AG04450 (cell line): ENCODE measurements at regions of chr6 and their contacts with region 1.

Region 1: GRCh38 chr6:72580281-72580940 is 41.5 kb upstream of the KCNQ5 start:
- DNase-seq: peak; percentile 49
- H3K4me3 ChIP-seq: no peak overlapping the region
- H3K27ac ChIP-seq: no peak overlapping the region
- H3K27me3 ChIP-seq: no peaks in the 10 kb centered on the region
- CTCF ChIP-seq: peak; percentile 84

Region 2: DNA sequence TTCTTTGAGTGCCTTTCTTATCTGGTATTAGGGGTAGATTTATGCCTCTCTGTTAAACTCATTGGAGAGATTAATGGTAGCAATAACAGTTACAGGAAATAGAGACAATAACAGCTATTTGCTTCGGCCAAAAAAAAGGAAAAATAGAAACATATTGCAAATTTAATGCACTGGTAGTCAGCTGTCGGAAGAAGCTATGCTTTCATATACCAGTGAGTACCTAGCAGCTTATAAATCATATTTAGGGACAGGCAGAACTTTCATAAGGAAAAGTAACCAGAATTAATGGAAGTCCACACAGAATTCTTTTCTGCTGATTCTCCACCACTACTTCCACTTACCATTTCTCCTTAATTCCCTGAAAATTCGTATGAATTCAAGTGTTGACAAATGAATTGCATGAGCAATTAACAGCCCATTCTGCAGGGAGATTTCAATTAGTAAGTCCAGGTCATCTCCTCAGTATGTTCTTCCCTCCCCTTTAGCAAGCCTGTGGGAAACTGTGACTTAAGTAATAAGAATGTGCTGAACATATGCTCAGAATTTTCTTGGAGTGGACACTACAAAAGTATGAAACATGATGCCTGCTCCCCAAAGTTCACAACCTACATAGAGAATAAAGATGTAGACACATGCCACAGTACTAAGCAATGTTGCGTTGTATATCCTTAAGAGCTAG is 155.3 kb before region 1 on chr6:
- CTCF ChIA-PET with region 1: interaction called, 17 read pairs
- POLR2A ChIA-PET with region 1: no interaction called
- DNase-seq: peak; percentile 74
- H3K4me3 ChIP-seq: no peak overlapping the region
- H3K27ac ChIP-seq: no peak overlapping the region
- H3K27me3 ChIP-seq: no peaks in the 10 kb centered on the region
- CTCF ChIP-seq: no peak

Region 3: DNA sequence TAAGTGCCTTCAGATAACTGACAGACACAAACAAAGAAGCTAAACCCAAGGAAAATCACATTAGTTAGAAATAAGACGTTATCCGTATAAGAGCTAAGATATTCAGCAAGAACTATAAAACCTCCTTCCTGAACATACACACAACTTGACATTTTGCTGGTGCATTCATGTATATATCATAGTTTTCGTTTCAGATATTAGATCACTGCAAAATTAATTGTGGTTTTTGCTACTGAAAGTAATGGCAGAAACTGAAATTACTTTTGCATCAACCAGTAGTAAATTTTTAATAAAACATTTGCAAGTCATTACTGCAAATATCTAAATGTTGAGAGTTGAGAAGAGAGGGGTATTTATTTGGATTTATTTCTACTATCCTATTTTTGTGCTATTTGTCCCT is 15.4 kb after region 1 on chr6:
- CTCF ChIA-PET with region 1: interaction called, 25 read pairs
- POLR2A ChIA-PET with region 1: no interaction called
- DNase-seq: no peak
- H3K4me3 ChIP-seq: no peak overlapping the region
- H3K27ac ChIP-seq: no peak overlapping the region
- H3K27me3 ChIP-seq: no peaks in the 10 kb centered on the region
- CTCF ChIP-seq: no peak

Region 4: GRCh38 chr6:72748759-72749158 is 168.3 kb after region 1 on chr6:
- CTCF ChIA-PET with region 1: no interaction called
- POLR2A ChIA-PET with region 1: no interaction called
- DNase-seq: peak; percentile 38
- H3K4me3 ChIP-seq: no peak overlapping the region
- H3K27ac ChIP-seq: no peak overlapping the region
- H3K27me3 ChIP-seq: no peaks in the 10 kb centered on the region
- CTCF ChIP-seq: no peak

Region 5: DNA sequence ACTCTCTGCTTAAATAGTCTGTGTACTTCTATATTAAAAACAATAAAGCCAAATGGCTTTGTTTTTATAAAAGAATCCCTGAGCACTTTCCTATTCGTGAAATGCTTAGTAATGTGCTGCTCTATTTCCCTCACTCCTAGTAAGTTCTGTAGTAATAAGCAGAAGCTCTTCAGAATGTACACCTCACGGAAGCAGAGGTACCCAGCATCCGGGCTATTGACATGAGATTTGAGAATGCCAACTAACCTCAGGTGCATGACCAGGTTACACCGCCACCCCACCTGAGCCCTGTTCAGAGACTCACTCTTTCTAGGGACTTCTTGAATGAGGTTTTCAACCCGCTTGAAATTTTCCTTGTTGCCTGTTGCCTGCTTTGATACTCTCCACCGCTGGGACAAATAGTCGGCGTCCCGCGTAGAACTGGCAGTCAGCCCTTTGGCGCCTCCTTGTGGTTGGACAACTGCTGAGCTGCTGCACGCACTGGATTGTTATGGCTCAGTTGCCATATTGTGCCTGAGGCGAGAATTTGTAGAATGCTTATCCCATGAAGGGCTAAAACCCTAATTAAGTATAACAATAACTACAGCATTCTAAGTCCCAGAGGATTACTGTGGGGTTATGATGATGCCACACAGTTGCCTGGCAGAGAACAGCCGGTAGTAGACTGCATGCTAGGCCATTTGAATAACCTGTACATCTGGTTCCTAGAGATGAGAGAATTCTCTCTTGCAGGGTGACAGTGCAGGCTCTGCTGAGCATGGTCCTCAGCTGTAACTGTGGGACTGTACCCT is 549.4 kb after region 1 on chr6:
- CTCF ChIA-PET with region 1: interaction called, 13 read pairs
- POLR2A ChIA-PET with region 1: no interaction called
- DNase-seq: peak; percentile 37
- H3K4me3 ChIP-seq: no peak overlapping the region
- H3K27ac ChIP-seq: no peak overlapping the region
- H3K27me3 ChIP-seq: no peaks in the 10 kb centered on the region
- CTCF ChIP-seq: peak; percentile 100